ENCODE measurements at regions of chr10 and their contacts with region 1.

Region 1: DNA sequence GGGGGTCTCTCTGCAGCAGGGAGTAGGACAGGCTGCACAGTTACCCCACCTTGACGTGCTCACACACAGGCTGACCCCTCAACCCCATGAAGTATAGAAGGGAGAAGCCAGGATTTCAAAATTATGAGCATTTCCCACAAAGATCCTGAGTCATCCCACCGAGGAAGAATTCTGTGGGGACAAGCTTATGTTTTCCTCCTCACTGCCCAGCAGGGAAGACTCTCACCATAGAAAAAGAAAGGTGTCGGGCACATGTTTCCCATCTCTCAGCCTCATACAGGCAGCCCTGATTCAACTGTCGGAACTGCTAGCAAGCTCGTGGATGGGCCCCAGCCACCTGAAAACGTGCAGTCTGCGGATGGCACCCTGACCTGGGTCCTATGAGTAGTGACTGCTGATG is 499.7 kb upstream of the MKI67 start:
- DNase-seq: no peak
- ATAC-seq: no peak
- H3K4me3 Mint-ChIP-seq: no peak overlapping the region
- H3K27ac Mint-ChIP-seq: no peak overlapping the region
- H3K4me1 Mint-ChIP-seq: no peaks in the 10 kb centered on the region
- H3K27me3 Mint-ChIP-seq: peaks cover 1% of the 10 kb centered on the region

Region 2: DNA sequence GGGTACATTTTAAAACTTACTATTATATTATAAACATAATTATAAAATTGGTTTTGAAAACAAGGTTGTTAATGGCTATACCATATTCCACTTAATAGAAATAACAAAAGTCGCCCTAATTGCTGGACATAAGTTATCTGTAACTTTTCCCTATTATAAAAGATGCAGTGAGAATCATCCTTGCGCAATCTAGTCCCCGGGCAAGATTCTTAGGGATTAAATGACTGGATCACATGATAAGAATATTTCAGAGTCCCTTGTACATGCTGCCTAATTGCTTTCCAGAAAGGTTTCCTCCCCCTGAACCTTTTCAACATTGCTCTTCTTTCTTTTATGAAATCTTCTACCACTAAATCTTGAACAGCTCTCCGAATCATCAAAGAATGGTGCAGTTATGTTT is 19.9 kb before region 1 on chr10:
- CTCF ChIA-PET with region 1: no interaction called
- POLR2A ChIA-PET with region 1: interaction called, 11 read pairs
- intact Hi-C with region 1: no loop called
- DNase-seq: no peak
- ATAC-seq: no peak
- H3K4me3 Mint-ChIP-seq: no peak overlapping the region
- H3K27ac Mint-ChIP-seq: no peak overlapping the region
- H3K4me1 Mint-ChIP-seq: no peaks in the 10 kb centered on the region
- H3K27me3 Mint-ChIP-seq: peaks cover 2% of the 10 kb centered on the region

Measured in activated CD4-positive, alpha-beta T cell treated with anti-CD3 and anti-CD28 coated beads for 36 hours (primary cell).